Left colon (tissue), 2 donors: ENCODE measurements at regions of chr16 and their contacts with region 1.

Region 1: DNA sequence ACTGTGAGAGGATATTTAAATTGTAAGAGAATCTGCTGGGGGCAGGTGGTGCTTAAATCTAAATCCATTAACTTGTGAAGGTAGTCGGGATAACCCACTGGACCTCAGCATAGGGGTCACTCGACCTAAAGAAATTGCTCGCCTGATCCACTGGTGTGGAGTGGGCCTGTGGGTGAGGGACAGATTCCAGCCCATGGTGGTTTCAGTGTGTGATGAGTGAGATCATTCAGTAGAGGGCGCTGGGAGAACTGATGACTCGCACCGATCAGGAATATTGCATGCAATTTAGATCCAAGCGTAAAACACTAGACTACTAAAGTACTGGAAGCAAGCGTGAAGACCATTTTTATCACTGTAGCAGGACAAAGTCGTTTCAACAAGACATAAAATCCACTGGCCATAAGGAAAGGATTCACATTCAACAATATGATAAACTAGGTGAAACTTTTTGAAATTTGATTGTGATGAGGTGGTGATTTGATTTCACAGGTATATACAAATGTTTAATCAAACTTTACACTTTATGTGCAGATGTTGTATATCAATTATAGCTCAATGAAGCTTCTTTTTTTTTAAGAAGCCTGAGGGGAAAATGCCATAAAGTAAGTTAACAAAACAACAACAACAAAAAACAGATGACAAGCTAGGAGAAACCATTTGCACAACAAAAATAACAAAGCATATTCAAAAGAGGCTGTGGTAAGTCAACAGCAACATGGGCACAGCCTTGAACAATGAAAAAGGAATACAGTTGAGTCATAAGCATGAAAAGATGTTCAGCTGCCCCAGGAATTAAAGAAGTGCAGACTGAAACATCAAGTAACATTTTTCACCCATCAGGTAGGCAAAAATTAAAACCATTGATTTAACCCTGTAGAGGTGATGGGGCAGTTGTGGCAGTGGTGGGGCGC is 7.5 kb upstream of the TMEM170A start:
- DNase-seq: peak in 1 of 2 donors; percentile 45
- ATAC-seq: peak; percentile 98

Region 2: DNA sequence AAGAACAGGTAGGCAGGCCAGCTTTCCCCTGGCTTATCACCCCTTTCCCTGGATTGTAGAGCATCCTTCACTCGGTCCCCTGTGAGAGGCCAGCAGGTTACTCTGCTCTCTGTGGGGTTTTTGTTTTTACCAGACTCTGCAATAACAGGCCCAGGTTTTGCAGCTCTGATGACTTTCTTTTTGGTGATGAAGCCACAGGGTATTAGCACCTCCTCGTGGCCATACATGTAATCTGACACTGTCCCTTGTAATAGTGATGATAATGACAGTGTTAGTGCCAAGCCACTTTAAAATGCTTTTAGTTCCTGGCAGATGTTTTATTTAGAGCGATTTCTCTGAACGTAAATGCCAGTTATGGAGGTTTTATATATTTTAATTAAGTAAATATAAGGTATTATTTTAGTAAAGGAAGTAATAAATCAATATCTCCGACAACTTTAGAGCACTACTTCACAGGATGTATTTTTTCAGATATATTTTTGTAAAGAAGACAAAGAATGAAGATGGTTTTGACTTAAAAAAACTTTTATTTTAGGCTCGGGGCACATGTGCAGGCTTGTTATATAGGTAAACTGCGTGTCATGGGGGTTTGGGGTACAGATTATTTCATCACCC is 292.3 kb after region 1 on chr16:
- intact Hi-C with region 1: loop called in 1 of 2 experiments (anchors 5 kb)
- DNase-seq: peak; percentile 37 to 54
- ATAC-seq: peak; percentile 95